ENCODE measurements at regions of chr16 and their contacts with region 1.

Region 1: GRCh38 chr16:56931892-56932720 is at the start of gene HERPUD1:
- DNase-seq: peak; percentile 91 to 97
- H3K4me3 ChIP-seq: peak within 1 kb of the TSS; percentile 69 to 95 (median 84)
- H3K27ac ChIP-seq: peak within 1 kb of the TSS; percentile 81
- H3K4me1 ChIP-seq: peaks cover 5 to 17% (median 11%) of the 10 kb centered on the region in 4 experiments
- H3K27me3 ChIP-seq: no peaks in the 10 kb centered on the region
- CTCF ChIP-seq: peak in 1 of 3 experiments; percentile 0; a peak in 1 of 4 replicates
- EP300 ChIP-seq: peak in 1 of 2 experiments; percentile 45; a peak in 1 of 3 replicates
- POLR2A ChIP-seq: peak; percentile 94 to 99
- RAD21 ChIP-seq: no peak; a peak in 1 of 4 replicates
- total RNA-seq, gene HERPUD1: 34.7 and 35.6 TPM in 2 replicates

Region 2: DNA sequence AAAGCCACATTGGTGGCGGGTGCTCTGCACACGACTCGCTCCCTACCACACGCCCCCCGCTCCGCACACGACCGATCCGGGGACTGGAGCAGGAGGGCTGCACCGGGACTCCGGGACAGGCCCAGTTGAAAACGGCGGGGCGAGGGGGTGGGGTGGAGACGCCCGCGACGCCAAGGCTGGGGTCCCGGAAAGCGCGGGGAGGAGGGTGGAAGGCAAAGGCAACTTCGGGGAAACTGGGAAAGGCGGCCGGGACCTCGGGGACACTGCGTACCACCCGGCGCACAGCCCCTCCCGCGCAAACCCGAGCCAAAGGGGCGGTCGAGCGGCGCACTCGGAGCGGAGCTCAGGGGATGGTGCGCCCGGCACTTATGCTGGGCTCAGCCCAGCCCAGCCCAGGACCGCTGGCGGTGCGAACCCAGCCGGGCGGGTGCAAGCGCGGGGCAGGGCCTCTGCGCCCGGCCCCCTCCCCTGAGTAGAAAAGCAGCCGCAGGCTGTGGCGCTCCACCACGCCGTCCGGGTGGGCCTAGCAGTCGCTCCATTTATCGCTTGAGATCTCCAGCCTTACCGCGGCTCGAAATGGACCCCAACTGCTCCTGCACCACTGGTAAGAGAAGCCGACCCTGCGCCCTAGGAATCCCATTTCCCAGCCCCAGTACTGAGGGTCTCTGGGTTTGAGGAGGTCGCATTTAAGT is 299.8 kb before region 1 on chr16 and contains the start of gene MT1M:
- CTCF ChIA-PET with region 1: no interaction called
- POLR2A ChIA-PET with region 1: no interaction called
- DNase-seq: peak in 1 of 2 experiments; percentile 75
- H3K4me3 ChIP-seq: peak within 1 kb of the TSS; percentile 22 to 56 (median 32); a peak in 6 of 8 replicates
- H3K27ac ChIP-seq: no peak within 1 kb of the TSS
- H3K4me1 ChIP-seq: peaks cover 0 to 12% (median 5%) of the 10 kb centered on the region in 4 experiments; a peak in 6 of 7 replicates
- H3K27me3 ChIP-seq: peaks cover 87 to 98% (median 96%) of the 10 kb centered on the region in 4 experiments
- CTCF ChIP-seq: no peak
- EP300 ChIP-seq: no peak
- POLR2A ChIP-seq: no peak
- RAD21 ChIP-seq: no peak
- total RNA-seq, gene MT1M: not detected in 2 replicates

Region 3: DNA sequence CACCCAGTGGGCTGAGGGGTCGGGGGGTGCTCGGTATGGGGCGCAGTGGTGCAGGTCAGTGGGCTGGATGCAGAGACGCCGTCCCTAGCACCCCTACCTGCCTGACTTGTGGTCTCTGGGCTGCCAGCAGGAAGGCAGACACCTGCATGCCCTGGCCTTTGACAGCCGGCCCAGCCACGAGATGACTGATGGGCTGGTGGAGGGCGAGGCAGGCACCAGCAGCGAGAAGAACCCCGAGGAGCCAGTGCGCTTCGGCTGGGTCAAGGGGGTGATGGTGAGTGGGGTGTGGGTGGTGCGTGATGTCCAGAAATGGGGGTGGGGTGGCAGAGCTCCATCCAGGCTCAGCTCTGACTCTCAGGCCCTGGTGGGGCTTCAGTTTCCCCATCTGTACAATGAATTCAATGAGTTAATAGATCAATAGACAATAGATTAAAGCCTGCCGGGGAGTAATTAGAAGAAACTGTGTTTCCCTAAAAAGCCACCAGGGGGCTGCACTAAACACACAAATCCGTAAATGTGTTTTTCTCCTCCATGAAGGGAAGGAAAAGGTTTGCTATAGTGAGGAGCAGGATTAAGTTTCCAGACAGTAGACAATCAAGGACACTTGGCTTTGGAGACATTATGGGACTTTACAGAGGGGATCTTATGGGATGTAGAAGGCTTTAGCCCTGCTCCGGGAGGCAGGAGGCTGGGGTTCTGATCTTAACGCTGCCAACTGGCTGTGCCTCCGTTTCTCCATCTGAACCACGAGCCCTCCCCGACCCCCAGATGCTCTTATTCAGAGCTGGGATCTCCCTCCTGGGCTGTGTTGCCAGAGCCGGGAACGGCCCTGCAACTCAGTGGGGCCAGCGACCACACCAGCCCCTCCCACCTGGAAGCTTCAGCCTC is 64.9 kb before region 1 on chr16:
- CTCF ChIA-PET with region 1: interaction called, 32 read pairs
- POLR2A ChIA-PET with region 1: interaction called, 28 read pairs
- DNase-seq: peak in 1 of 2 experiments; percentile 63
- H3K4me3 ChIP-seq: no peak overlapping the region
- H3K27ac ChIP-seq: no peak overlapping the region
- H3K4me1 ChIP-seq: no peaks in the 10 kb centered on the region
- H3K27me3 ChIP-seq: no peaks in the 10 kb centered on the region
- CTCF ChIP-seq: peak in 2 of 3 experiments; percentile 50 to 70; a peak in 3 of 4 replicates
- EP300 ChIP-seq: no peak
- POLR2A ChIP-seq: no peak
- RAD21 ChIP-seq: peak; percentile 53 to 71

Region 4: DNA sequence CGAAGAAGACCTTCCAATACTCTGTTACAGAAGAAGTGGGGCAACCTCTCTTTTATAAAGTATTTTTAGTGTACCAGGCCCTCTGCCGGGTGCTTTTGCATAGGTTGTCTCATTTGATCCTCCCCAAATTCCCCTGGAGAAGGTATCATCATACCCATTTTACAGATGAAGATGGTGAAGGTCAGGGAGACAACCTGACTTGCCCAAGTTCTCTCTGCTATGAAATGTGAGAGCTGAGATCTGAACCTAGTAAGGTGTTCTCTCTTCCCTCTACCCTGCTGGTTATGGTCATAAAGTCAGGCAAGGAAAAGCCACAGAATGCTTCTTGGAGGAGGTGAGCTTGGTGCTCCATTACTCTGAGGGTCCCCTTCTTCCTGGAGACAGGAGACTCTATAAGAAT is 28.2 kb before region 1 on chr16:
- CTCF ChIA-PET with region 1: interaction called, 4 read pairs
- POLR2A ChIA-PET with region 1: interaction called, 13 read pairs
- DNase-seq: no peak
- H3K4me3 ChIP-seq: no peak overlapping the region
- H3K27ac ChIP-seq: no peak overlapping the region
- H3K4me1 ChIP-seq: peaks cover 0 to 6% (median under 1%) of the 10 kb centered on the region in 4 experiments; a peak in 2 of 7 replicates
- H3K27me3 ChIP-seq: no peaks in the 10 kb centered on the region
- CTCF ChIP-seq: no peak
- EP300 ChIP-seq: no peak
- POLR2A ChIP-seq: no peak
- RAD21 ChIP-seq: no peak

Region 5: GRCh38 chr16:56919099-56919800 is 12.9 kb before region 1 on chr16:
- CTCF ChIA-PET with region 1: interaction called, 15 read pairs
- POLR2A ChIA-PET with region 1: interaction called, 82 read pairs
- DNase-seq: no peak
- H3K4me3 ChIP-seq: no peak overlapping the region
- H3K27ac ChIP-seq: no peak overlapping the region
- H3K4me1 ChIP-seq: no peaks in the 10 kb centered on the region
- H3K27me3 ChIP-seq: no peaks in the 10 kb centered on the region
- CTCF ChIP-seq: no peak
- EP300 ChIP-seq: no peak
- POLR2A ChIP-seq: no peak
- RAD21 ChIP-seq: no peak

Region 6: GRCh38 chr16:56950881-56951771 is 19.0 kb after region 1 on chr16:
- CTCF ChIA-PET with region 1: interaction called, 4 read pairs
- POLR2A ChIA-PET with region 1: interaction called, 125 read pairs
- DNase-seq: peak in 1 of 2 experiments; percentile 74
- H3K4me3 ChIP-seq: no peak overlapping the region
- H3K27ac ChIP-seq: no peak overlapping the region
- H3K4me1 ChIP-seq: no peaks in the 10 kb centered on the region
- H3K27me3 ChIP-seq: no peaks in the 10 kb centered on the region
- CTCF ChIP-seq: peak; percentile 78 to 90 (median 88)
- EP300 ChIP-seq: no peak
- POLR2A ChIP-seq: no peak
- RAD21 ChIP-seq: peak; percentile 83

Region 7: GRCh38 chr16:57409870-57410585 is 477.9 kb after region 1 on chr16:
- CTCF ChIA-PET with region 1: no interaction called
- POLR2A ChIA-PET with region 1: no interaction called
- DNase-seq: no peak
- H3K4me3 ChIP-seq: no peak overlapping the region
- H3K27ac ChIP-seq: no peak overlapping the region
- H3K4me1 ChIP-seq: no peaks in the 10 kb centered on the region; a peak in 2 of 7 replicates
- H3K27me3 ChIP-seq: no peaks in the 10 kb centered on the region
- CTCF ChIP-seq: no peak
- EP300 ChIP-seq: no peak
- POLR2A ChIP-seq: no peak
- RAD21 ChIP-seq: no peak; a peak in 1 of 4 replicates